Activated CD4-positive, alpha-beta memory T cell treated with anti-CD3 and anti-CD28 coated beads for 36 hours (primary cell): ENCODE measurements at regions of chr5 and their contacts with region 1.

Region 1: DNA sequence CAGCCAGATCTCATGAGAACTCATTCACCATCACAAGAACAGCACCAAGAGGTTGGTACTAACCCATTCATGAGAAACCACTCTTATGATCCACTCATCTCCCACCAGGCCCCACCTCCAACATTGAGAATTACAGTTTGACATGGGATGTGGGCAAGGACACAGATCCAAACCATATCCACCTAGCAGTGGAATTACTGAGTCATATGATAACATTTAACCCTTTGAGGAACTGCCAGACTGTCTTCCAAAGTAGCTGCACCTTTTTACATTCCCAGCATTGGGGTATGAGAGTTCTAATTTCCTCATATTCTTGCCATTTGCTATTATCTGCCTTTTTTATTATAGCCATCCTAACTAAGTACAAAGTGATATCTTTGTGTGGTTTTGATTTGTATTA is 51.9 kb downstream of the CTNNA1 start:
- DNase-seq: no peak
- H3K4me3 Mint-ChIP-seq: no peak overlapping the region
- H3K27ac Mint-ChIP-seq: no peak overlapping the region
- H3K4me1 Mint-ChIP-seq: peaks cover 8% of the 10 kb centered on the region
- H3K27me3 Mint-ChIP-seq: peaks cover 2% of the 10 kb centered on the region

Region 2: GRCh38 chr5:138789771-138790242 is 15.3 kb before region 1 on chr5:
- CTCF ChIA-PET with region 1: interaction called, 23 read pairs
- POLR2A ChIA-PET with region 1: no interaction called
- intact Hi-C with region 1: no loop called
- DNase-seq: no peak
- H3K4me3 Mint-ChIP-seq: no peak overlapping the region
- H3K27ac Mint-ChIP-seq: no peak overlapping the region
- H3K4me1 Mint-ChIP-seq: peaks cover 13% of the 10 kb centered on the region
- H3K27me3 Mint-ChIP-seq: peaks cover 15% of the 10 kb centered on the region

Region 3: DNA sequence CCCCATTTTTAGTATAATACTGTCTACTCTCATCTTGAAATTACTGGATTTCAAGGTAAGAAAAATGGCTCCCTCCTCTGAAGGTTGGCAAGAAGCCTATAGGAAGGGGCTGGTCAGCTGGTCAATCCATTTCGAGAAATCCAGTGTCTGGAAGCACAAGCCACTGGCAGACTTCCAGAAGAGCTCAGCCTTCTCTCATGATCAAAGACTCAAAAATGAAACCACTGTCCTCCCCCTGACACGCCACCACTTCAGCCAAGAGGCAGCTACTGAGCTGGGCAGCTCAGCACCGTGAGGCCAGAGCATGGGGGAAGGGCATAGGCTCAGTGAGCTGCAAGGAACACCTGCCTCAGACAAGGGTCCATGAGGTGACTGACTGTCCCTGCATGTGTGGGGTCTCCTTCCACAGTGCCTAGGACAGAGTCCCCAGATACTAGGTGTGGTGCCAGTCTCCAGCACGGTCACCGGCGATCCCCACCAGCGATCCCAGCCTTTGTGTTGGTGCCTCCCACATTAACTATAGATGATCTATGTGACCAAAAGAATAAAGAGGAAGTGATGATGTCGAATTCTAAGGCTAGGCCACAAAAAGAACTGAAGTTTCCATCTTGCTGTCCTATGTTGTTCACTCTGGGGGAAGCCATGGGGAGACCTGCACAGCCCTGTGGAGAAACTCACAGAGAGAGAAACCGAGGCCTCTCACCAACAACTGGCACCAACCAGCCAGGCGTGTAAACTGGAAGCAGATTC is 170.2 kb after region 1 on chr5:
- CTCF ChIA-PET with region 1: no interaction called
- POLR2A ChIA-PET with region 1: no interaction called
- intact Hi-C with region 1: no loop called
- DNase-seq: no peak
- H3K4me3 Mint-ChIP-seq: no peak overlapping the region
- H3K27ac Mint-ChIP-seq: no peak overlapping the region
- H3K4me1 Mint-ChIP-seq: peaks cover 8% of the 10 kb centered on the region
- H3K27me3 Mint-ChIP-seq: no peaks in the 10 kb centered on the region